ENCODE measurements at regions of chr7 and their contacts with region 1.

Region 1: DNA sequence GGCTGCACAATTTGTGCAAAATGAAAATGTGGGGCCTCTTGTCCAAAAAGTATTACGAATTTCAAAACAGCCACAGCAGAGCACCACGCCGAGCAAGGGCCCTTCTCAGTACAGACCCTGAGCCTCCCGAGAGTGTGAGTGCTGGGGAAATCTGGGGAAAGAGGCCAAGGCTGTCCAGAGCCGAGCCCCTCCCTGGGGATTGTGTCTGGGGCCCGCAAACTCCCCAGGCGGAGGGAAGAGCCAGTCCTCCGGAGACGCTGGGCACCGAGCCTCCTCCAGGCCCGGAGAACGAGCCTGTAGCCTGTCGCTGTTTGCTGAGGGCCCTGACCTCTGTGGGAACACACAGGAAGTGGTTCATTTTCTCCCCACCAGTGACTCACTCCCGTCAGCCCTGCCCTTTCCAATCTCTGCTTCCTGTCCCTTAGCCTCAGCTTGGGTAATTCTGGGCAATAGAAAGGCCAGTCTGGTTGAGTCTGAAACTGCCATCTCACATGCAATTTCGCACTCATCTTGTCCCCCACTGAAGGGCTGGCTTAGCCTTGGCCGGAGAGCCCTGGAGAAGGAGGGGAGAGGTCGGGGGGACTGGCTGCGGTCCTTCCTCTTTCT is 19.5 kb upstream of the GNA12 start:
- DNase-seq: peak; percentile 74 to 91 (median 89)
- ATAC-seq: peak; percentile 87 to 97 (median 96)
- H3K4me3 ChIP-seq: peak overlapping the region in 9 of 12 donors; percentile 2 to 45 (median 25)
- H3K27ac ChIP-seq: peak overlapping the region; percentile 68 to 97 (median 86)
- H3K4me1 ChIP-seq: peaks cover 0 to 31% (median 20%) of the 10 kb centered on the region in 12 donors
- H3K27me3 ChIP-seq: no peaks in the 10 kb centered on the region
- CTCF ChIP-seq: peak in 1 of 12 donors; percentile 12
- POLR2A ChIP-seq: peak in 1 of 2 donors; percentile 67

Region 2: GRCh38 chr7:2757904-2758672 is 105.5 kb before region 1 on chr7:
- intact Hi-C with region 1: loop called in 2 of 10 experiments (anchors 5 kb)
- DNase-seq: peak in 3 of 5 donors; percentile 44 to 52 (median 48)
- ATAC-seq: peak; percentile 13 to 65 (median 42)
- H3K4me3 ChIP-seq: peak overlapping the region in 4 of 12 donors; percentile 1 to 19 (median 13)
- H3K27ac ChIP-seq: peak overlapping the region; percentile 18 to 98 (median 84)
- H3K4me1 ChIP-seq: peaks cover 16 to 65% (median 54%) of the 10 kb centered on the region in 12 donors
- H3K27me3 ChIP-seq: no peaks in the 10 kb centered on the region
- CTCF ChIP-seq: no peak
- POLR2A ChIP-seq: no peak

Region 3: GRCh38 chr7:3154912-3155494 is 291.4 kb after region 1 on chr7:
- intact Hi-C with region 1: loop called in 7 of 10 experiments (anchors 2 to 10 kb)
- DNase-seq: no peak
- ATAC-seq: no peak
- H3K4me3 ChIP-seq: no peak overlapping the region
- H3K27ac ChIP-seq: no peak overlapping the region
- H3K4me1 ChIP-seq: no peaks in the 10 kb centered on the region
- H3K27me3 ChIP-seq: peaks cover 0 to 9% (median 0%) of the 10 kb centered on the region in 9 donors
- CTCF ChIP-seq: peak; percentile 31 to 68 (median 49)
- POLR2A ChIP-seq: no peak

Region 4: GRCh38 chr7:3200504-3200903 is 336.9 kb after region 1 on chr7:
- intact Hi-C with region 1: loop called in 1 of 10 experiments (anchors 5 kb)
- DNase-seq: no peak
- ATAC-seq: peak in 2 of 4 donors; percentile 45 to 58
- H3K4me3 ChIP-seq: no peak overlapping the region
- H3K27ac ChIP-seq: no peak overlapping the region
- H3K4me1 ChIP-seq: no peaks in the 10 kb centered on the region
- H3K27me3 ChIP-seq: no peaks in the 10 kb centered on the region
- CTCF ChIP-seq: peak in 10 of 12 donors; percentile 11 to 41 (median 30)
- POLR2A ChIP-seq: no peak

Region 5: DNA sequence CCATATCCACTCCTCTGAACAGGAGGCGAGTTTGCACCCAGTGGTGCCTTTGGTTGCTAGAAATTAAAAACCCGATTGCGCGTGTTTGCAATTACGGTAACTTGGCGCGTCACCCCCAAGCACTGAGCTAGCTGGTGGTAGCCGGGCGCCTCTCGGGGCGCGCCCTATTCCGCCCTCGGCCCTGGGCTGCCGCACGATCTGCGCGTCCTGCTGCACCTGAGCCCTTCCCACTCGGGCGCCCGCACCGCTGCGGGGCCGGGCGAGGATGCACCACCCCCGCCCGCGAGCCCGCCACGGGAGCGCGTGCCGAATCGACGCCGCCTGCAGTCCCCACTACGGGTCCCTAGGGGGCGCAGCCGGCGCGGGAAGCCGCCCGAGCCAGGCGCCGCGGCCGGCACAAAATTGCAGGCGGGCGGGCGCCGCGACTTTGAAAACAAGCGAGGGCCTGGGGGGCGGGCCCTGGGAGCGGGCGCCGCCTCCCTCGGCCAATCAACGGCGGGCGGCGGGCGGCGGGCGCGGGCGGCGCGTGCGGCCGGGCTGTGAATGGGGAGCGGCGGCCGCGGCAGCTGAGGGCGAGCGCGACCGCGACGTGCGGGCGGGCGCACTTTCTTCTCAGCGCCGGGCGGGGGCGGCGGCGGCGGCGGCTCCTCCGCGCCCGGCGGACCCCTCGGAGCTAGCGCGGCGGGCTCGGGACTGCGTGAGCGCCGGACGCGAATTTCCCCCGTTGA is 437.3 kb after region 1 on chr7 and contains the start of gene SDK1:
- intact Hi-C with region 1: loop called in 2 of 10 experiments (anchors 10 kb)
- DNase-seq: peak; percentile 91 to 96 (median 93)
- ATAC-seq: peak; percentile 77 to 99 (median 98)
- H3K4me3 ChIP-seq: peak within 1 kb of the TSS; percentile 34 to 84 (median 58)
- H3K27ac ChIP-seq: peak within 1 kb of the TSS in 3 of 12 donors; percentile 37 to 66 (median 62)
- H3K4me1 ChIP-seq: peaks cover 0 to 19% (median 10%) of the 10 kb centered on the region in 12 donors
- H3K27me3 ChIP-seq: peaks cover 0 to 38% (median 5%) of the 10 kb centered on the region in 9 donors
- CTCF ChIP-seq: peak; percentile 60 to 97 (median 92)
- POLR2A ChIP-seq: peak in 1 of 2 donors; percentile 28
- total RNA-seq, gene SDK1: 2.2 to 5.8 (median 3.6) TPM

Region 6: GRCh38 chr7:3673524-3673923 is 810.0 kb after region 1 on chr7:
- intact Hi-C with region 1: loop called in 1 of 10 experiments (anchors 10 kb)
- DNase-seq: no peak
- ATAC-seq: no peak
- H3K4me3 ChIP-seq: no peak overlapping the region
- H3K27ac ChIP-seq: no peak overlapping the region
- H3K4me1 ChIP-seq: no peaks in the 10 kb centered on the region
- H3K27me3 ChIP-seq: no peaks in the 10 kb centered on the region
- CTCF ChIP-seq: peak in 9 of 12 donors; percentile 17 to 47 (median 27)
- POLR2A ChIP-seq: no peak

Region 7: DNA sequence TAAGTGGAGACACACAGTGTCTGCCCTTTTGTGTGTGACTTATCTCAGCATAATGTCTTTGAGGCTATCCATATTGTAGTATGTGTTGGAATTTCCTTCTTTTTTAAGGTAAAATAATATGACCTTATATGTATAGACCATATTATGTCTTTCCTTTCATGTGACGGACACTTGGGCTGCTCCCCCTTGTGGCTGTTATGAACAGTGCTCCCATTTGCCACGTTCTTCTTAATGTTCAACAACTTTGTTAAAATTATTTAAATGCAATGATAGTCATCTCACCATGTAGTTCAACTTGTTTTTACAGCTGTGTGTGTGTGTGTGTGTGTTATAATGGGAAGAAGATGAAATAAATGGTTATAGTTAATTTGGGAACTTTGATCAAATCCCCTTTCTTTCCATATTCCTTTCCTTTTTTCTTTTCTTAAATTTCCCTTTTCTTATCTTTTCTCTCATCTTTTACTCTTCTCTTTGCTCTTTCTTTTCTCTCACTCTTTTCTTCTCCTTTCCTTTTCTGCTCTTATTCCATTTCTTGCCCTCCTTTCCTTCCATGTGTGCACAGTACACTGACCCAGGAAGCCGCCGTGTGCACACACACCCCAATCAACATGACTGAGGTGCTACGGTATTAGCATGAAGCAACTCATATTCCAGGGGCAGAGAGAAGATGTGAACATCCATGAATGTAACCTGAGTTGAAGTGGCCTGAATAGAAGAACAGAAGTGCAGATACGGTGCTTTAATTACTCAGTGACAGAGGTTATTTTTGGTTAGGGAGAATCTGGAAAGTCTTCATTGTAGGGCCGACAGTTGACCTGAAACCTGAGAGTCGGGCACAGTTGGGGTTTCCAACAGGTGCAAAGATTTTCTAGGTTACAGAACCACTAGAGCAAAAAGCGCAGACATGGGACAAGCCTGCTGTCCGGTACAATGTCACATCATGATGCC is 1034.1 kb after region 1 on chr7:
- intact Hi-C with region 1: loop called in 7 of 10 experiments (anchors 2 to 10 kb)
- DNase-seq: no peak
- ATAC-seq: peak in 1 of 4 donors; percentile 56
- H3K4me3 ChIP-seq: no peak overlapping the region
- H3K27ac ChIP-seq: no peak overlapping the region
- H3K4me1 ChIP-seq: peaks cover 0 to 3% (median 0%) of the 10 kb centered on the region in 12 donors
- H3K27me3 ChIP-seq: no peaks in the 10 kb centered on the region
- CTCF ChIP-seq: peak; percentile 64 to 85 (median 76)
- POLR2A ChIP-seq: no peak

Measured in heart left ventricle (tissue), 16 donors.